CD8-positive, alpha-beta T cell (primary cell): ENCODE measurements at regions of chr17 and their contacts with region 1.

Region 1: GRCh38 chr17:48047741-48048383 is at the start of gene NFE2L1:
- DNase-seq: peak; percentile 93 to 99 (median 97)
- ATAC-seq: peak; percentile 96
- H3K4me3 ChIP-seq: peak within 1 kb of the TSS; percentile 69 to 77
- H3K4me3 Mint-ChIP-seq: peak within 1 kb of the TSS; percentile 93
- H3K27ac ChIP-seq: peak within 1 kb of the TSS; percentile 88 to 91
- H3K27ac Mint-ChIP-seq: peak within 1 kb of the TSS; percentile 99
- H3K4me1 ChIP-seq: peaks cover 41% of the 10 kb centered on the region
- H3K4me1 Mint-ChIP-seq: peaks cover 57% of the 10 kb centered on the region
- H3K27me3 ChIP-seq: no peaks in the 10 kb centered on the region
- H3K27me3 Mint-ChIP-seq: no peaks in the 10 kb centered on the region
- CTCF ChIP-seq: no peak
- total RNA-seq, gene NFE2L1: 29.5 to 32.5 TPM

Region 2: GRCh38 chr17:47733047-47733673 is 314.7 kb before region 1 on chr17 and contains the start of gene TBX21:
- CTCF ChIA-PET with region 1: no interaction called
- POLR2A ChIA-PET with region 1: no interaction called
- intact Hi-C with region 1: loop called in 1 of 2 experiments (anchors 2 kb)
- DNase-seq: peak; percentile 81 to 96 (median 91)
- ATAC-seq: peak; percentile 85
- H3K4me3 ChIP-seq: peak within 1 kb of the TSS; percentile 70 to 99
- H3K4me3 Mint-ChIP-seq: peak within 1 kb of the TSS; percentile 97
- H3K27ac ChIP-seq: peak within 1 kb of the TSS; percentile 58 to 88
- H3K27ac Mint-ChIP-seq: peak within 1 kb of the TSS; percentile 96
- H3K4me1 ChIP-seq: peaks cover 19% of the 10 kb centered on the region
- H3K4me1 Mint-ChIP-seq: peaks cover 47% of the 10 kb centered on the region
- H3K27me3 ChIP-seq: no peaks in the 10 kb centered on the region
- H3K27me3 Mint-ChIP-seq: peaks cover 3% of the 10 kb centered on the region
- CTCF ChIP-seq: peak; percentile 43
- total RNA-seq, gene TBX21: 37.0 to 39.1 TPM

Region 3: GRCh38 chr17:48068491-48068961 is 20.7 kb after region 1 on chr17:
- CTCF ChIA-PET with region 1: interaction called, 3 read pairs
- POLR2A ChIA-PET with region 1: interaction called, 6 read pairs
- intact Hi-C with region 1: loop called in 1 of 2 experiments (anchors 1 kb)
- DNase-seq: no peak
- ATAC-seq: no peak
- H3K4me3 ChIP-seq: no peak overlapping the region
- H3K4me3 Mint-ChIP-seq: no peak overlapping the region
- H3K27ac ChIP-seq: no peak overlapping the region
- H3K27ac Mint-ChIP-seq: no peak overlapping the region
- H3K4me1 ChIP-seq: no peaks in the 10 kb centered on the region
- H3K4me1 Mint-ChIP-seq: no peaks in the 10 kb centered on the region
- H3K27me3 ChIP-seq: no peaks in the 10 kb centered on the region
- H3K27me3 Mint-ChIP-seq: no peaks in the 10 kb centered on the region
- CTCF ChIP-seq: no peak

Region 4: GRCh38 chr17:48084932-48085444 is 37.1 kb after region 1 on chr17:
- CTCF ChIA-PET with region 1: interaction called, 11 read pairs
- POLR2A ChIA-PET with region 1: no interaction called
- intact Hi-C with region 1: no loop called
- DNase-seq: no peak
- ATAC-seq: no peak
- H3K4me3 ChIP-seq: no peak overlapping the region
- H3K4me3 Mint-ChIP-seq: no peak overlapping the region
- H3K27ac ChIP-seq: no peak overlapping the region
- H3K27ac Mint-ChIP-seq: no peak overlapping the region
- H3K4me1 ChIP-seq: no peaks in the 10 kb centered on the region
- H3K4me1 Mint-ChIP-seq: peaks cover 10% of the 10 kb centered on the region
- H3K27me3 ChIP-seq: no peaks in the 10 kb centered on the region
- H3K27me3 Mint-ChIP-seq: no peaks in the 10 kb centered on the region
- CTCF ChIP-seq: no peak

Region 5: DNA sequence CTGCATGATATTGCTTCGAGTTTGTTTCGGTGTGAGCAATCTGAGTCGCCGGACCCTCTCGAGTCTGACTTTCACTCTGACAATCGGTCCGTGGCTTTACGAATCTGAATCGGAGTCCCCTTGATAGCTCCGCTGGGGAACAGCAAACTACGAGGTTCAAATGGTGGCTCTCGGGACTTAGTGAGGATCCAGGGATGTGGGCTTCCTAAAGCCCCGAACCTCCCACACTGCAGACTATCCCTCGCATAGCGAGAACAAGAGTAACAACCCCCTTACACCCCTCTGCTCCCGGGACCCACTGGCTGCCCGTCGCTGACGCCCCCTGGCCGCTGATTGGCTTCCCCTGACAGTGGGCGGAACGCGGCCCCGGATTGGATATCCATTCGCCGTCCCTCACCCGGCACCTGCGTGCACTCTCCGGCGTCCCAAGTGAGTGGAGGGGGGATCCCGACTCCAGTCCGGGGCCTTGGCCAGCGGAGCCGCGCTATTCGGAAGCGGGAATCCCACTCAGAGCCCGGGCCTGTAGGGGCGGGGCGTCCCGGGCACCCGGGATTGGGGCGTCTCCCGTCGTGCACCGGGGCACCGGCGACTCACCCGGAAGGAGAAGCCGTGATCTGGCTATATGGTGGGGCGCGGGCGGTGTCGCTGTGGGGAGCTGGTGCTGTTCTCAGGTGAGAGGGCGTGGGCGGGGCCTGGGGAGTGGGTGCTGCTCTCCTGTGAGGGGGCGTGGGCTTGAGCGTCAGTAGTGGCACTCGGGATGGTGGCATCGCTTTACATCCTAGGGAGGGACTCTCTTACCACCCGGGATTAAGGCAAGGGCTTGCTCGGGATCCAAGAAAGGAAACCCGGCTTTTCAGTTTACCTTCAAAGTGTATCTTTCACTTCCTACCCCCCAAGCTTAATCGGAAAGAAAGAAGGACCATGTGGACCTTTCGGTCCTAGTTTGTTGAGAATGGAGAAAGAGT is 59.6 kb after region 1 on chr17 and contains the start of gene SNX11:
- CTCF ChIA-PET with region 1: no interaction called
- POLR2A ChIA-PET with region 1: interaction called, 6 read pairs
- intact Hi-C with region 1: loop called in 1 of 2 experiments (anchors 1 kb)
- DNase-seq: peak; percentile 80 to 97 (median 92)
- ATAC-seq: peak; percentile 93
- H3K4me3 ChIP-seq: peak within 1 kb of the TSS; percentile 70 to 91
- H3K4me3 Mint-ChIP-seq: peak within 1 kb of the TSS; percentile 98
- H3K27ac ChIP-seq: peak within 1 kb of the TSS; percentile 78 to 82
- H3K27ac Mint-ChIP-seq: peak within 1 kb of the TSS; percentile 88
- H3K4me1 ChIP-seq: peaks cover 37% of the 10 kb centered on the region
- H3K4me1 Mint-ChIP-seq: peaks cover 60% of the 10 kb centered on the region
- H3K27me3 ChIP-seq: no peaks in the 10 kb centered on the region
- H3K27me3 Mint-ChIP-seq: no peaks in the 10 kb centered on the region
- CTCF ChIP-seq: no peak
- total RNA-seq, gene SNX11: 15.3 to 16.3 TPM